Spleen (tissue), 13 donors: ENCODE measurements at regions of chr3 and their contacts with region 1.

Region 1: DNA sequence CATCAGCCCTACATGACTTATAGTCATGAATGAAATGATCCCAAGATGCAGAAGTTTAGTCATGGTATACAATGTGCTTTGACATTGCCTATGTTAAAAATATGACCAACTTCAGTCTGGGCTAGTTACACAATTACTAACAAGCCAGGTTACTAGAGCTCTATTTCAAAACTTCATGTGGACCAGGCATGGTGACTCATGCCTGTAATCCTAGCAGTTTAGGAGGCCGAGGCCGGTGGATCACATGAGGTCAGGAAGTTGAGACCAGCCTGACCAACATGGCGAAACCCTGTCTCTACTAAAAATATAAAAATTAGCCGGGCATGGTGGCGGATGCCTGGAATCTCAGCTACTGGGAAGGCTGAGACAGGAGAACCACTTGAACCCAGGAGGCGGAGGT is 613.0 kb downstream of the CADM2 start:
- DNase-seq: no peak
- H3K4me3 ChIP-seq: no peak overlapping the region
- H3K27ac ChIP-seq: no peak overlapping the region
- H3K4me1 ChIP-seq: no peaks in the 10 kb centered on the region
- H3K27me3 ChIP-seq: no peaks in the 10 kb centered on the region
- CTCF ChIP-seq: no peak
- POLR2A ChIP-seq: no peak

Region 2: DNA sequence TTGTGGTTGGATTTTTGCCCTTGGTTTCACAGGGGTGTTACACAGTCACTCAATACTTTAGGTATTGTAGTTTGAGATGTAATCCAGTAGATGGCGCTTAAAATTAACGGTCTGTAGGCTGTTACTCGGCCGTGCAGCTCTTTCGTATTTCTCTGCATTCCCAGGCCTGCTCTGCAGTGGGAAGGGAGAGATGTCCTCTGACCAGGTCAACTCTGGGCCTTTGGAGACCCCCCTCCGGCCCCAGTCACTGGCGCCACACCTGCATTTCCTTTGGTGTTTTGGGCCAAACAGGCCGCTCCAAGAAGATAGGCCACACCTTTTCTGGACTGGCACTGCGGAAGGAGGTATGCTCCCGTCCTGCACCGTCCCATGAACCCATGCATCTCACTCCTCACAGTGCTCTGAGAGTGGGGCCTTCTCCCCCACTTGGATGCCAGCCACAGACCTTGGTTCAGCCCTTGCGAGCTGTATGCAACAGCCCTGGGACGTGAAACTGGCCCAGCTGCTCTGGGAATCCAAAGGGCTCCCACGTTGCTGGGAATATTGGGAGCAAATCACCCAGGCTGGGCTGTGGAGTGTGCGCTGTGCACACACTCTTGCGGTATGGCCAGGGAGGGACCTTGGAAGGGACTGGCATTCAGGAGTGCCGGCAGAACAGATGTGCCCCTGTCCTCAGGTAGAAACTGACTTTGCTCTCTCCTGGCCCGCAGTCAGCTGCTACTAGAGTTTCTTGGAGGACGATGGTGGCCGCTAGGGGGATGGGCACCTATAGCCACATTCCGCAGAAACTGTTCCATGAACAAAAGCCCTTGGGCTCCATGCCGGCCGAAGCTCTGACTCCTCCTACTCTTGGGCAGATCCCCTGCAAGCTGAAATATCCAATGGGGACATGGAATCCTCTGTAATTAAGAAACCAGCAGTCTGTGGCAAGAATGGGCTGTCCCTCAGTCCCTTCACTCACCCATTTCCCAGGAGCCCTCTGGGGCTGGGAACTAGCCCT is 1023.6 kb before region 1 on chr3:
- intact Hi-C with region 1: loop called (anchors 5 kb)
- DNase-seq: no peak
- H3K4me3 ChIP-seq: no peak overlapping the region
- H3K27ac ChIP-seq: no peak overlapping the region
- H3K4me1 ChIP-seq: no peaks in the 10 kb centered on the region
- H3K27me3 ChIP-seq: no peaks in the 10 kb centered on the region
- CTCF ChIP-seq: peak in 10 of 11 experiments; percentile 19 to 61 (median 40)
- POLR2A ChIP-seq: no peak

Region 3: DNA sequence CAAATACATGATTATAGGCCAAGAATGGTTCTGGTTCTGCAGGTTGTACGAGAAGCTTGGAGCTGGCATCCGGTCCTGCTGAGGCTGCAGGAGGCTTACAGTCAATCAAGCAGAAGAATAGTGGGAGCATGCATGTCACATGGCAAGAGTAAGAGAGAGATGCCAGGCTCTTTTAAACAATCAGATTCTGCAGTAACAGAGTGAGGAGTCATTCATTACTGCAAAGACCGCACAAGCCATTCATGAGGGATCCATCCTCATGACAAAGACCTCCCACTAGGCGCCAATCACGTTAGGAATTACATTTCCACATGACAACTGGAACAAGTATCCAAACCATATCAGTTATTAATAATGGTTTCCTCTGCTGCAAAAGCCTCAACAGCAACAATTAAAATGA is 76.2 kb before region 1 on chr3:
- intact Hi-C with region 1: no loop called
- DNase-seq: no peak
- H3K4me3 ChIP-seq: no peak overlapping the region
- H3K27ac ChIP-seq: no peak overlapping the region
- H3K4me1 ChIP-seq: no peaks in the 10 kb centered on the region
- H3K27me3 ChIP-seq: no peaks in the 10 kb centered on the region
- CTCF ChIP-seq: no peak
- POLR2A ChIP-seq: no peak

Region 4: DNA sequence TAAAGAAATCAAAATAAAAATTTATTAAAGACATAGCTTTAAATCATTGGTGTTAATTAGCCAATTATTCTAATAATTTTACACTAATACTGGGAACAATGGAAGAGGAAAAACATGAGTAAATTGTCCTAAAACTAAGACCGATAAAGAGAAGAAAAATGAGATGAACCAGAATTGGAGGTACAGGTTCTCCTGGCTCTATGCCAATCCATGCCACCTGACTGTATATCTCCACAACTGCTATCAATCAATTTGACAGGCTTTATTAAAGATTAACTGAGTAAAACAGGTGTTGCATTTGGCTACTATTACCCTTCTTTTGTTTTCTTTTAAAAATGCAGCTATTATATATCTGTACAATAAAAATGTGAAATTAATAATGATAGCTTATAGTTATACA is 236.9 kb after region 1 on chr3:
- intact Hi-C with region 1: no loop called
- DNase-seq: no peak
- H3K4me3 ChIP-seq: no peak overlapping the region
- H3K27ac ChIP-seq: no peak overlapping the region
- H3K4me1 ChIP-seq: no peaks in the 10 kb centered on the region
- H3K27me3 ChIP-seq: no peaks in the 10 kb centered on the region
- CTCF ChIP-seq: no peak
- POLR2A ChIP-seq: no peak